AG04449 (cell line): ENCODE measurements at regions of chr2 and their contacts with region 1.

Region 1: GRCh38 chr2:168118733-168119514 is 128.5 kb downstream of the STK39 start:
- DNase-seq: peak; percentile 51
- H3K4me3 ChIP-seq: no peak overlapping the region
- CTCF ChIP-seq: peak; percentile 44

Region 2: GRCh38 chr2:167937403-167937802 is 181.5 kb before region 1 on chr2:
- CTCF ChIA-PET with region 1: interaction called, 13 read pairs
- POLR2A ChIA-PET with region 1: no interaction called
- DNase-seq: no peak
- H3K4me3 ChIP-seq: no peak overlapping the region
- CTCF ChIP-seq: no peak

Region 3: GRCh38 chr2:167986223-167986622 is 132.7 kb before region 1 on chr2:
- CTCF ChIA-PET with region 1: interaction called, 11 read pairs
- POLR2A ChIA-PET with region 1: no interaction called
- DNase-seq: no peak
- H3K4me3 ChIP-seq: no peak overlapping the region
- CTCF ChIP-seq: no peak

Region 4: GRCh38 chr2:168097431-168097830 is 21.5 kb before region 1 on chr2:
- CTCF ChIA-PET with region 1: interaction called, 16 read pairs
- POLR2A ChIA-PET with region 1: no interaction called
- DNase-seq: no peak
- H3K4me3 ChIP-seq: no peak overlapping the region
- CTCF ChIP-seq: no peak

Region 5: DNA sequence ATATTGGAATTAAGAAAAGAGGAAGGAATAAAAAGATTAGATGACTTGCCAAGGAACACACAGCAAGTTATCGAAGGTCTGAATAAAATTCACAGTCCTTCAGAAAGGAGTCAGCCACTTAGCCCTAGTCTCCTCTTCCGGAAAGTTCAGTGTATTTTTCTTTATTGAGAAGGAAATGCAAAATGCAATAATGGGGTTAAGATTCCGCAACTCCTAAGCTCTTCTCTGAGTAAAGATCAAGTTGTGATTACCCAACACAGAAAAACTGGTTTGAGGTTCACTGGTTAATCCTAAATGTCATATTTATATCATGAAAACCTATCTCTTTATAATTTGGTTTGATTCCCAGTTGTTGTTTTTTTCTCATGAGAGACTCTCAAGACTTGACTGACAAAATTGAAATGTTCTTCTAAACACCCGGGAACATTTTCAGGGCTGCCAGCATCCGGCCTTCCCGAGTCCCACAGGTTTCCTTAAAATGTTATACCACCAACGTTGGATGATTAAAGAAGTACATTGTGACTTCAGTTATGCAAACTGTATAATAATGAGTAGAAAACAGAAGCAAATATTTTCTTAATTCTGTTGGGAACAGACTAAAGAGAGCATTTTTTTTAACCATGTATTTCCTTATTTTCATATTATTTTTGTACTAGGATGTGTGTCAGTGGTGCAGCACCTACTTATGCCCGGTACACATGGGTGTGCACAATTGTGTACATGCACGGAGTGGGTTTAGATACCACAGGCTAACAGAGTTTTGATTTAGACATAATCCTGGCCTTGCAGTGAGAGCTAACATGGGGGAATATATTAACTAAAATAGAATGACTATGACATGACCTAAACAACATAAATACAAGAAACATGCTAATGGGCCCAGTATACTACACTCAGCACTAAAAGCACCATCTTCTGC is 28.2 kb after region 1 on chr2:
- CTCF ChIA-PET with region 1: interaction called, 16 read pairs
- POLR2A ChIA-PET with region 1: no interaction called
- DNase-seq: no peak
- H3K4me3 ChIP-seq: no peak overlapping the region
- CTCF ChIP-seq: no peak

Region 6: DNA sequence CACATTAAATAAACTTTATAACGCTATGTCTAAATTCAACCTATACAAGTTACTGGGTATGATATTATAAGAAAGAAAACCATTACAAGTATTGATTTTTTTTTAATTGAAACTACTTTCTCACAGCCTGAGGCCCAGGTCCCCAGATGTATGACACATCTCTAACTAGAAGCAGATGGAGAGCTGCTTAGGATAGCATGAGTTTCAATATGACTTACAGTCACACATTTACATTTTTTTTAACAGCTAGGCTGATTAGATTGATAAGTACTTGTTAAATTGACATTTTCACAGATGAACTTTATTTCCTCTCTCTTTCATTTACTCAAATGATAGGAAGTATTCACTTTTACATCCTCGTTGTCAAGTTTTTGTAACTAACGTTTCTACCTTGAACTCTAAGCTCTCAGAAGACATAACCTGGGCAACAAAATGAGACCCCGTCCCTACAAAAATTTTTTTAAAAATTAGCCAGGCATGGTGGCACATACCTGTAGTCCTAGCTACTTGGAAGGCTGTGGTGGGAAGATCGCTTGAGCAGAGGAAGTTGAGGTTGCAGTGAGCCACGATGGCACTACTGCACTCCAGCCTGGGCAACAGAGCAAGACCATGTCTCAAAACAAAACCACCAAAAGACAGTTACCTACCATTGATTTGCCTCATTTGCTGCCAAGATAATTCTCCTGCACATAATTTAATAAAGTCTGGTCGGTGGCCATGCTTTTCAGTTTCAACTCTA is 76.0 kb after region 1 on chr2:
- CTCF ChIA-PET with region 1: no interaction called
- POLR2A ChIA-PET with region 1: no interaction called
- DNase-seq: no peak
- H3K4me3 ChIP-seq: no peak overlapping the region
- CTCF ChIP-seq: no peak

Region 7: GRCh38 chr2:168375195-168375798 is 256.4 kb after region 1 on chr2:
- CTCF ChIA-PET with region 1: no interaction called
- POLR2A ChIA-PET with region 1: no interaction called
- DNase-seq: no peak
- H3K4me3 ChIP-seq: no peak overlapping the region
- CTCF ChIP-seq: no peak